Posterior cingulate gyrus (tissue), 11 donors: ENCODE measurements at regions of chrX and their contacts with region 1.

Region 1: DNA sequence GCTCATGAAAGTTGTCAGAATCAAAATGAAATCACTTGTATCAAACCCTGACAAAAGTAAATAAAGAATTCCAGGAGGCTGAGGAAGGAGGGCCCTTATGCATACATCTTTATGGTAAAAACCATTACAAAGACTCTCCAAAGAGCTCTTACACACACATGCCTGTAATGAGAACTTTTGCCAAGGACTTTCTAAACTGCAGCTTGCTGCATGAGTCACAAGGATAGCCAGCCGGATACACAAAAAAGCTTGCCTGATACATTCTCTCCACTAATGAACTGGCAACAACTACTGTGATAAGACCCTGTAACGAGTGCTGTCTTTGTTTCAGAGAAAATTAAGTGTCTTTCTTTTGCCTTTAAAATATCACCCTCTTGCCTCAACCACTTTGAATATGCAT is 618.1 kb downstream of the PPP4R3C start:
- DNase-seq: no peak

Region 2: GRCh38 chrX:27706526-27706925 is 861.5 kb after region 1 on chrX:
- intact Hi-C with region 1: loop called (anchors 10 kb)
- DNase-seq: no peak